Tibial artery (tissue), 4 donors: ENCODE measurements at regions of chr3 and their contacts with region 1.

Region 1: DNA sequence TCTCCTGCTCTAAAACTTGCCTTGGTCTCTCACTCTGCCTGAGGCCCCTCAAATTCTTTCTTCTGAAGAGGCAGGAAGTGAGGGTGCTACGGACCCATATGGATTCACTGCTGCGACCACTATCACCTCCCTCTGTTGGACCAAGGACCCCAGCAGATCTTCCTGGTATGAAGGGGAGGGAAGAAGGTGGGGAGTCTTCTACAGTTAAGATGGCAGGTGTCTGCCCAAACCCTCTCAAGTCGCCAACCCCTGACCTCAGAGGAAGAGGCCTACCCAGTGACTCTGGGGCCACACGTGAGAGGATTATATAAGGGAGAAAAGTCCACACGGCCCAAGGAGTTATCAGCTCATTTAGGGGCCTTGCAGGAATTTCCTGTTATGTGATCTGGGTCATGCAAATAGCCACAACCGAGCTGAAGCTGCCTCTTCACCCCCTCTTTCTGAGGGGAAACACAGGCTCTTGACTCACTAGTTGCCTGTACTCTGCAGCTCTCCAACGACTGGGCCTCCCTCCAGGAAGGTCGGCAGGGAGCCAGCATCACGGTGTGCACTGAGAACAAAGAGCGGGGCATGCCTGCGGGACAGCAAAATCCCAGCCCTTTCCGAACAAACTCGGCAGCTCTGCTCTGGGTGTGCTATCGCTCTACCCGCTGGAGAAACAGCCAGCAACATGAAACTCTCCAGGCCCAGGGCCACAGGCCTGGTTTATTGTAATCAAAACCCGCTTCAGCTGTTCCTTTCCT is 116.0 kb downstream of the XXYLT1 start:
- DNase-seq: peak; percentile 73 to 83
- H3K4me3 ChIP-seq: no peak overlapping the region
- H3K27ac ChIP-seq: peak overlapping the region in 1 of 2 donors; percentile 45
- H3K4me1 ChIP-seq: peaks cover 0 to 31% (median 12%) of the 10 kb centered on the region in 4 donors
- H3K27me3 ChIP-seq: no peaks in the 10 kb centered on the region
- CTCF ChIP-seq: no peak

Region 2: GRCh38 chr3:195040773-195041520 is 114.0 kb before region 1 on chr3:
- intact Hi-C with region 1: no loop called
- DNase-seq: peak in 1 of 2 donors; percentile 45
- H3K4me3 ChIP-seq: no peak overlapping the region
- H3K27ac ChIP-seq: no peak overlapping the region
- H3K4me1 ChIP-seq: no peaks in the 10 kb centered on the region
- H3K27me3 ChIP-seq: peaks cover 0 to 45% of the 10 kb centered on the region in 2 donors
- CTCF ChIP-seq: no peak

Region 3: DNA sequence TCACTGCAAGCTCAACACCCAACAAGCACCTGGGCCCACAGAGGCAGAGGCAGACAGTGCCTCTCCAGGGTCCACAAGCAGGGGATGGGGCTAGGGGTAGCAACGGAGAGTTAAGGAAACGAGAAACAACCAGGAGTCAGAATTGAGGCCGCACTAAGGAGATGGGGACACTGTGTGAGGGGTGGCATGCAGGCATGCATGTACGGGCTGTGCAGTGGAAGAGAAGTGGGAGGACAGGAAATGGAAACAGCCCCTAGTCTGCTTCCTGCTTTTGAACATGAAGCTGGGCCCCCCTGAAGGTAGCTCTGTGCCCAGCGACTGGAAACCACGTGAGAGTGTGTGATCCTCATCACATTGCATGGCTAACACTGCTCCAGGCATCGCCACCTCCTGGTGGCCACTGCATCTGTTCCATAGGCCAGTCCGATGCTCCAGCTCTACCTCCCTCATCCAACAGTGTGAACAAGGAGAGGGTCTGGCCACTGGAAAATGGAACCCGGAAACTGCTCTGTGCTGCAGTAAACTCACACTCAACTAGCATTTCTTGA is 72.0 kb after region 1 on chr3:
- intact Hi-C with region 1: loop called (anchors 10 kb)
- DNase-seq: peak in 1 of 2 donors; percentile 35
- H3K4me3 ChIP-seq: no peak overlapping the region
- H3K27ac ChIP-seq: no peak overlapping the region
- H3K4me1 ChIP-seq: peaks cover 0 to 32% (median 25%) of the 10 kb centered on the region in 4 donors
- H3K27me3 ChIP-seq: no peaks in the 10 kb centered on the region
- CTCF ChIP-seq: no peak